Activated CD4-positive, alpha-beta T cell treated with anti-CD3 and anti-CD28 coated beads, Interleukin-2, amount 10 ng/mL, durations not matched to agents 24 days and 14 days (primary cell): ENCODE measurements at regions of chr12 and their contacts with region 1.

Region 1: GRCh38 chr12:15522565-15523187 is 200.4 kb downstream of the PTPRO start:
- DNase-seq: no peak
- H3K4me3 Mint-ChIP-seq: no peak overlapping the region
- H3K27ac Mint-ChIP-seq: no peak overlapping the region
- H3K4me1 Mint-ChIP-seq: peaks cover 6% of the 10 kb centered on the region
- H3K27me3 Mint-ChIP-seq: peaks cover 37% of the 10 kb centered on the region

Region 2: GRCh38 chr12:15227004-15227679 is 295.5 kb before region 1 on chr12:
- intact Hi-C with region 1: loop called (anchors 5 kb)
- DNase-seq: peak; percentile 74
- H3K4me3 Mint-ChIP-seq: no peak overlapping the region
- H3K27ac Mint-ChIP-seq: no peak overlapping the region
- H3K4me1 Mint-ChIP-seq: no peaks in the 10 kb centered on the region
- H3K27me3 Mint-ChIP-seq: peaks cover 32% of the 10 kb centered on the region

Region 3: DNA sequence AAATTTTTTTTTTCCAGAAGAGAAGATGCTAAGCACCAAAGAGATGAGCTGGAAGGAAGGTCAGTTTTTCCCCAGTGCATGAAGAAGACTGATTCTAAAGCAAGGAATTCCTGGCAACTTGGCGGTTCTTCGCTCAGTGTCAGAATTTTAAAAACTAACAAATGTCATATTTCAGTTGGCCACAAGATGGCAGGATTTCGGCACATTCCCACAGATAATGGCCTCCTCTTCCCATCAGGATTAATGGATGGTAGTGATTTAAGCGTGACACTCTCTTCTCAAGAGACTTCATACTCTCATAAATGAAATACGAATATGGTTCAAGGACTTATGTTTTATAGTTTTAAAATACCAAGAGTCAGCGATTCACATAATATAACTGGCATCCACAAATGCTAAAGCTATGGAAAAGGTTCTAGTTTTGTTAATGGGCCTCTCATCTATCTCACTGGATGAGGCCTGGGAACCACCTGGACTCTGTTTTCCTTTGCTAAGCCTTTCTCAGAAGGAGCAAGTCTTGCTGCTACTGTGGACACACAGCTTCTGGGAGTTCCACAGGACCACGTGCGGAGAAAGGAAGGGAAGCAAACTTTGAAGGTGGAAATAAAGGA is 246.5 kb before region 1 on chr12:
- intact Hi-C with region 1: loop called (anchors 1 kb)
- DNase-seq: peak; percentile 65
- H3K4me3 Mint-ChIP-seq: no peak overlapping the region
- H3K27ac Mint-ChIP-seq: no peak overlapping the region
- H3K4me1 Mint-ChIP-seq: peaks cover 5% of the 10 kb centered on the region
- H3K27me3 Mint-ChIP-seq: peaks cover under 1% of the 10 kb centered on the region